PC-3 (cell line): ENCODE measurements at regions of chr4 and their contacts with region 1.

Region 1: GRCh38 chr4:150010525-150011126 is 67.6 kb upstream of the DCLK2 start:
- DNase-seq: peak; percentile 69
- ATAC-seq: peak; percentile 87
- H3K4me3 ChIP-seq: no peak overlapping the region
- H3K27ac ChIP-seq: no peak overlapping the region
- H3K4me1 ChIP-seq: no peaks in the 10 kb centered on the region
- H3K27me3 ChIP-seq: no peaks in the 10 kb centered on the region
- CTCF ChIP-seq: peak; percentile 59

Region 2: DNA sequence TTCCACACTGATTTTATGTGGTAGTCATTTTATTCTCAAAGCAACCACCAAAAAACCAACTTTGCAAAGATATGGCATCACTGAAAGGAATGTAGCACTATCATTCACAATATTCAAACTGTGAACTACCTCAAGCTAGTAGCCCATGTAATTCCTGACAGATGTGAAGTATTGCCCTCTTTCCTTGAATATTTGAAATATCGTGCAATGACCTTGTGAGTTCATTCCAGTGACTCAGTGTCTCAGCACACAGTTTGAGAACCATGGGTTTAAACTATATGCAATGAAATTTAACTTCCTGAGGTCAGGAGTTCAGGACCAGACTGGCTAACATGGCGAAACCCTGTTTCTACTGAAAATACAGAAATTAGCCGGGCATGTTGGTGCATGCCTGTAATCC is 174.1 kb before region 1 on chr4:
- CTCF ChIA-PET with region 1: no interaction called
- POLR2A ChIA-PET with region 1: no interaction called
- intact Hi-C with region 1: no loop called
- DNase-seq: no peak
- ATAC-seq: no peak
- H3K4me3 ChIP-seq: no peak overlapping the region
- H3K27ac ChIP-seq: no peak overlapping the region
- H3K4me1 ChIP-seq: peaks cover 18% of the 10 kb centered on the region
- H3K27me3 ChIP-seq: no peaks in the 10 kb centered on the region
- CTCF ChIP-seq: no peak

Region 3: DNA sequence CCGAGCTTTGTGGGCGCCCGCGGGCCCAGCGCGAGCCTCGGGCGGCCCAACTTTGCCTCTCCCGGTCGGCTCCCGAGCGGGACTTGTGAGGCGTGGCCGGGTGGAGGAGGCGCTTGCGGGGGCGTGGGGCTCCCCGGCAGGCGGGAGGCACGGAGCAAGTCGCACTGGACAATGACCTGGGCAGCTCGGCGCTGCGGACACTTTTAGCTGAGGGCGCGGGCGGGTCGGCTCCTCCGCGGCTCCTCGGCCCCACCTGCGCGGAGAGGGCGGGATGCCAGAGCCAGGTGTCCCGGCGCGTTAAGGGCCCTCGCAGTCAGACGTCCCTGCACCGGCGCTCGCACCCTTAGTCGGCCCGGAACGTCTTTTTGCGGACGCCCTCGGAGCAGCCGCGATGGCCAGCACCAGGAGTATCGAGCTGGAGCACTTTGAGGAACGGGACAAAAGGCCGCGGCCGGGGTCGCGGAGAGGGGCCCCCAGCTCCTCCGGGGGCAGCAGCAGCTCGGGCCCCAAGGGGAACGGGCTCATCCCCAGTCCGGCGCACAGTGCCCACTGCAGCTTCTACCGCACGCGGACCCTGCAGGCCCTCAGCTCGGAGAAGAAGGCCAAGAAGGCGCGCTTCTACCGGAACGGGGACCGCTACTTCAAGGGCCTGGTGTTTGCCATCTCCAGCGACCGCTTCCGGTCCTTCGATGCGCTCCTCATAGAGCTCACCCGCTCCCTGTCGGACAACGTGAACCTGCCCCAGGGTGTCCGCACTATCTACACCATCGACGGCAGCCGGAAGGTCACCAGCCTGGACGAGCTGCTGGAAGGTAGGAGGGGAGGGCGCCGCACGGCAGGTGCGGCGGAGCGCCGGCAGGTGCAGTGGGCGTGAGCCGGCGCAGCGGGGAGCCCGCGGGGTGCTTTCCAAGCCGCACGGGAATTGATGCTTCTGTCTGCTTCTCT is 68.3 kb after region 1 on chr4:
- CTCF ChIA-PET with region 1: no interaction called
- POLR2A ChIA-PET with region 1: no interaction called
- intact Hi-C with region 1: loop called (anchors 5 kb)
- DNase-seq: peak; percentile 19
- ATAC-seq: peak; percentile 68
- H3K4me3 ChIP-seq: peak overlapping the region; percentile 75
- H3K27ac ChIP-seq: no peak overlapping the region
- H3K4me1 ChIP-seq: peaks cover 4% of the 10 kb centered on the region; the same call in 1 of the 2 replicates
- H3K27me3 ChIP-seq: no peaks in the 10 kb centered on the region
- CTCF ChIP-seq: 0 out of 2 replicates have a peak, but pooled peaks have one; percentile 18